ENCODE measurements at regions of chr3 and their contacts with region 1.

Region 1: GRCh38 chr3:193732391-193732790 is 139.4 kb downstream of the OPA1 start:
- DNase-seq: peak; percentile 64
- H3K4me3 Mint-ChIP-seq: no peak overlapping the region
- H3K27ac Mint-ChIP-seq: no peak overlapping the region
- H3K4me1 Mint-ChIP-seq: peaks cover 11% of the 10 kb centered on the region
- H3K27me3 Mint-ChIP-seq: no peaks in the 10 kb centered on the region
- CTCF ChIP-seq: no peak

Region 2: DNA sequence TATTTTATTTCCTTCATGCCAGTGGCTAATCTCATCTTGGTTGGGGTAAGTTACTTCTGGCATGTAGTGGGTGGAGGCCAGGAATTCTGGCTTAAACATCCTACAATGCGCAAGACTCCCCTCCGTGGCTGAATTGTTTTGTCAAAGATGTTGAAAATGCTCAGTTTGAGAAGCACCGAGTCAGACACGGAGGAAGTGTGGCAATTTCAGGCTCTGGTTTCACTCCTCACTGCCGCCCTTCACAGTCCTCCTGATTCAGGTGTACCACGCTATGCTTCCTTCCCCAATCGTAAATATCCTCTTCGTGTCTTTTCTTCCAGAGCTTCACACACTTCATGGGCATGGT is 11.3 kb after region 1 on chr3:
- CTCF ChIA-PET with region 1: interaction called, 11 read pairs
- intact Hi-C with region 1: no loop called
- DNase-seq: peak; percentile 64
- H3K4me3 Mint-ChIP-seq: peak overlapping the region; percentile 69
- H3K27ac Mint-ChIP-seq: peak overlapping the region; percentile 93
- H3K4me1 Mint-ChIP-seq: peaks cover 39% of the 10 kb centered on the region
- H3K27me3 Mint-ChIP-seq: no peaks in the 10 kb centered on the region
- CTCF ChIP-seq: no peak

Measured in Calu3 (cell line).